ENCODE measurements at regions of chr1 and their contacts with region 1.

Region 1: DNA sequence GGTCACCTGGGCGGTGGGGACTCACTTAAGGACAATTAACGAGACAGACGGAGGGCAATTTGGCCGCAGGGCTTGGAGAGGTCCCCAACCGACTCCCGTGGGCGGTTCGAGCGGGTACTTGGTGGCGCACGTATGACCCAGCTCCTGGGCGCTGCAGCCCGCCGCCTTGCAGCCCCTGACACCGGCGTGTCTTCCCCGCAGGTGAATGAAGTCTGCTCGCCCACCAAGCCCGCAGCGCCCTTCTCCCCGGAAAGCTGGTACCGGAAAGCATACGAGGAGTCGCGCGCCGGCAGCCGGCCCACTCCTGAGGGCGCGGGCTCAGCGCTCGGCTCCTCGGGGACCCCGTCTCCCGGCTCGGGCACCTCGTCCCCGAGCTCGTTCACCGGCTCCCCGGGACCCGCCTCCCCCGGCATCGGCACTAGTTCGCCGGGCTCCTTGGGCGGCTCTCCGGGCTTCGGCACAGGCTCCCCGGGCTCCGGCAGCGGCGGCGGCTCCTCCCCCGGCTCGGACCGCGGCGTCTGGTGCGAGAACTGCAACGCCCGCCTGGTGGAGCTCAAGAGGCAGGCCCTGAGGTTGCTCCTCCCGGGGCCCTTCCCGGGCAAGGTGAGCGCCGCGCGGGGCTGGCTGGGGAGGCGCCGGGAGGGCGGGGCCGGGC is 1.4 kb downstream of the KIF26B start:
- DNase-seq: peak; percentile 84
- H3K4me3 ChIP-seq: peak overlapping the region; percentile 32 to 65 (median 38)
- H3K27ac ChIP-seq: no peak overlapping the region
- H3K4me1 ChIP-seq: peaks cover 27 to 42% (median 40%) of the 10 kb centered on the region in 4 donors
- H3K27me3 ChIP-seq: peaks cover 90% of the 10 kb centered on the region
- CTCF ChIP-seq: peak; percentile 57 to 82 (median 69)
- EP300 ChIP-seq: no peak
- POLR2A ChIP-seq: no peak

Region 2: DNA sequence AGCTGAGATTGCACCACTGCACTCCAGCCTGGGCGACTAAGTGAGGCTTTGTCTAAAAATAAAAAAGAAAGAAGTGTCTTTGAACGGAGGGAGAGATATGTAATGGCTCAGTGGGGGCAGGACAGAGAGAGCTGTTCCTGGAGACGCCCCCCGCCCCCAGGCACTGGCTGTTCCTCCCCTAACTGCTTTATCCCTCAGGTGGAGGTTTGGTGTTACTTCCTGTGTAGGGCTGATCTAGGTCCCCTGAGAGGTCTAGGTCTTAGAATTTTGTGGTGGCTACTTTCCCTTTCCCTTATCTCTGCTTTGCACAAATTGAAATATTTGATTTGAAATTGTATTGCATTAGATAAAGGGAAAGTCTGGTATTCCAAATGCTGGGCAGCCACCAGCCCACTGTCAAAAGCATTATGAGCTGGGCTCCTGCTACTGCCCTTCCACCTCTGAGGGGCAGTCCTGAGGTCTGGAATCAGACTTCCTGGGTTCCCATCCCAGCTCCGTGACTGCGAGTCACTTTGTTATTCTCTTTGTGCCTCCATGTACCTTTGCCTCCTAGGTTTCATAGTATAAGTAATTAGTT is 136.2 kb before region 1 on chr1:
- in situ Hi-C with region 1: no loop called
- intact Hi-C with region 1: no loop called
- DNase-seq: no peak
- H3K4me3 ChIP-seq: no peak overlapping the region
- H3K27ac ChIP-seq: no peak overlapping the region
- H3K4me1 ChIP-seq: no peaks in the 10 kb centered on the region
- H3K27me3 ChIP-seq: no peaks in the 10 kb centered on the region
- CTCF ChIP-seq: no peak
- EP300 ChIP-seq: no peak
- POLR2A ChIP-seq: no peak

Region 3: GRCh38 chr1:246012341-246012740 is 856.1 kb after region 1 on chr1:
- in situ Hi-C with region 1: loop called in 2 of 4 experiments (anchors 10 kb)
- intact Hi-C with region 1: no loop called
- DNase-seq: no peak
- H3K4me3 ChIP-seq: no peak overlapping the region
- H3K27ac ChIP-seq: no peak overlapping the region
- H3K4me1 ChIP-seq: no peaks in the 10 kb centered on the region
- H3K27me3 ChIP-seq: no peaks in the 10 kb centered on the region
- CTCF ChIP-seq: peak; percentile 49 to 63 (median 59)
- EP300 ChIP-seq: no peak
- POLR2A ChIP-seq: no peak